ENCODE measurements at regions of chr2 and their contacts with region 1.

Region 1: GRCh38 chr2:241686649-241687425 is at the start of gene DTYMK:
- DNase-seq: peak; percentile 97
- H3K4me3 Mint-ChIP-seq: peak within 1 kb of the TSS; percentile 98
- H3K27ac Mint-ChIP-seq: peak within 1 kb of the TSS; percentile 93
- H3K4me1 Mint-ChIP-seq: peaks cover 27% of the 10 kb centered on the region
- H3K27me3 Mint-ChIP-seq: no peaks in the 10 kb centered on the region
- total RNA-seq, gene DTYMK: 85.9 to 88.7 TPM

Region 2: DNA sequence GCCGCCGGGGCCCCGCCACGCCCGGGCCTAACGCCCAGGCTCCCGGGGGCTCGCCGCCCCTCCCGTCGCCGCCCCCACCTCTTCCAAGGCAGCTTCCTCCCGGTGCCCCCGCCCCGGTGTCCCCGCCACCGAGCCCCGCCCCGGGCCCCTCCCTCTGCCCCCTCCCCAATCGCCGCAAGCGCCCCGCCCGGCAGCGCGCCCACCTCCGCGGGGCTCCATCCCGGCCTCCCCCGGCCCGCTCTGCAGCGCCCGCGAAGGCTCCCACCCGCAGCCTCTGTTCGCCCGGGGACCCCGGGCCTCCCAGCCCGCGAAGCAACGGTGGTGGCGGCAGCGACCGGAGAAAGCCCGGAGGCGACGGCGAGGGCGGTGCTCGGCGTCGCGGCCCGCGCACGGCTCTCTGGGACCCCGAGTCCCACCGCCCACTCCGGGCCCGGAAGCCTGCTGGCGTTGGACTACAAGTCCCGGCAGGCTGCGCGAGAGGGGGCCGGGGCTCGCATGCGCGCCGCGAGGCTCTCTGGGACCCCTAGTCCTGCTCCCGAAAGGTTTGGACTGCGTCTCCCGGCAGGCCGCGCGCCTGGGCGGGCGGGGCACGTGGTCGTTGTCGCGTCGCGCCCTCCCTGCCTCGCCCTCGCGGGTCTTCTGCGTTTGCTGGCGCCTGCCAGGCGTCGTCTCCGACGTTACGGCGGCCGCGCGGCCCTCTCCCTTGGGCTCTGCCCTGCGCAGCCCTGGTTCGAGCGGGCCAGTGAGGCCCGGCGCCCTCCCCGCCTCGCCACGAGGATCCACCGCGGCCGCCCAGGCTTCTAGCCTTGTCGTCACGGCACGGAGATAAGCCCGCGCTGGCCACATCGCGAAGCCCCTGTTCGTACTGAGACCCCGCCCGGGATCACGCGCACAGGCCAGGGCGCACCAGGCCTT is 178.3 kb before region 1 on chr2 and contains the start of gene STK25:
- CTCF ChIA-PET with region 1: no interaction called
- POLR2A ChIA-PET with region 1: no interaction called
- intact Hi-C with region 1: loop called (anchors 1 kb)
- DNase-seq: peak; percentile 98
- H3K4me3 Mint-ChIP-seq: peak within 1 kb of the TSS; percentile 79
- H3K27ac Mint-ChIP-seq: peak within 1 kb of the TSS; percentile 56
- H3K4me1 Mint-ChIP-seq: peaks cover 19% of the 10 kb centered on the region
- H3K27me3 Mint-ChIP-seq: no peaks in the 10 kb centered on the region
- total RNA-seq, gene STK25: 97.9 to 99.1 TPM

Region 3: DNA sequence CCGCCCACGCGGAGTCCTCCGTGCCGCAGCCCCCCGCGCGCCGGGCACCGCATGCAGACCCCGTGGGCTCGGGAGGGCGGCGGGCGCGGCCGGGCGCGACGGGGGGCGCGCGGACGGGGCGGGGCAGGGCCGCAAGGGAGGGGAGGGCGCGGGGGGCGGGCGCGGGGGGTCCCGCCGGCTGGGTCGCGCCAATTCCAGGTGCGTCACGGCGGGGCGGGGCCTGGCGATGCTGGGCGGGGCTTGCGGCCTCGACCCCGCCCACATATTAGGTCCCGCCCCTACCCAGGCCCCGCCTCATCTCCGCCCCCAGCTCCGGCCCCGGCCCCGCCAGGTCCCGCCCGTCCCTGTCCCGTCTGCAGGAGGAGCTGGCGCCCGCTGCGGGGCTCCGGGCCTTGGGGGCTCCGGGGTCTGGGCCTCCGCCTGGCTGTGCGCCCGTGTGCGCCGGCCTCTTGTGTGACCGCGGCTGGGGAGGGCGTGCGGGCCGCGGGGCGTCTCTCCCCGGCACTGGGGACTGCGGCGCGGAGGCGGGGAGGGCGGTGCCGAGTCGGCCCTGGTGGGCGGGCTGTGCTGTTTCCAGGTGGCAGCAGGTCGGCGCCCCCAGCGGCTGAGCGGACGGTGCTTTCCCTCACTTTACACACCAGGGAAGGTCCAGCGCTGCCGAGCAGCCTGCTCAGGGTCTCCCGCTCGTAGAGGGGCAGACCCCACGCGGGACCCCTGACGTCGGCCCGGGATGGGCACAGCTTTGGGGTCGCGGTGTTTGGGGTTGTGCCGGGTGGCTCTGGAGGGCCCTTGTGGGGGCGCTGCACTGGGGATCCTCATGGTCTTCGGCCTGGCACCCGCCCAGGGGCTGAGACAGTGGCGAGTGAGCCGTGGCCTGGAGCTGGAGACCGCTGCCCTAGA is 15.5 kb after region 1 on chr2:
- CTCF ChIA-PET with region 1: interaction called, 40 read pairs
- POLR2A ChIA-PET with region 1: interaction called, 53 read pairs
- intact Hi-C with region 1: loop called (anchors 1 kb)
- DNase-seq: peak; percentile 90
- H3K4me3 Mint-ChIP-seq: peak overlapping the region; percentile 84
- H3K27ac Mint-ChIP-seq: peak overlapping the region; percentile 63
- H3K4me1 Mint-ChIP-seq: peaks cover 25% of the 10 kb centered on the region
- H3K27me3 Mint-ChIP-seq: no peaks in the 10 kb centered on the region

Region 4: GRCh38 chr2:241734467-241735208 is 47.8 kb after region 1 on chr2 and contains the start of gene D2HGDH:
- CTCF ChIA-PET with region 1: interaction called, 5 read pairs
- POLR2A ChIA-PET with region 1: interaction called, 4 read pairs
- intact Hi-C with region 1: loop called (anchors 1 kb)
- DNase-seq: peak; percentile 95
- H3K4me3 Mint-ChIP-seq: peak within 1 kb of the TSS; percentile 81
- H3K27ac Mint-ChIP-seq: peak within 1 kb of the TSS; percentile 70
- H3K4me1 Mint-ChIP-seq: peaks cover 49% of the 10 kb centered on the region
- H3K27me3 Mint-ChIP-seq: no peaks in the 10 kb centered on the region
- total RNA-seq, gene D2HGDH: 27.5 to 28.2 TPM